CD4-positive, alpha-beta T cell (primary cell): ENCODE measurements at regions of chr3 and their contacts with region 1.

Region 1: DNA sequence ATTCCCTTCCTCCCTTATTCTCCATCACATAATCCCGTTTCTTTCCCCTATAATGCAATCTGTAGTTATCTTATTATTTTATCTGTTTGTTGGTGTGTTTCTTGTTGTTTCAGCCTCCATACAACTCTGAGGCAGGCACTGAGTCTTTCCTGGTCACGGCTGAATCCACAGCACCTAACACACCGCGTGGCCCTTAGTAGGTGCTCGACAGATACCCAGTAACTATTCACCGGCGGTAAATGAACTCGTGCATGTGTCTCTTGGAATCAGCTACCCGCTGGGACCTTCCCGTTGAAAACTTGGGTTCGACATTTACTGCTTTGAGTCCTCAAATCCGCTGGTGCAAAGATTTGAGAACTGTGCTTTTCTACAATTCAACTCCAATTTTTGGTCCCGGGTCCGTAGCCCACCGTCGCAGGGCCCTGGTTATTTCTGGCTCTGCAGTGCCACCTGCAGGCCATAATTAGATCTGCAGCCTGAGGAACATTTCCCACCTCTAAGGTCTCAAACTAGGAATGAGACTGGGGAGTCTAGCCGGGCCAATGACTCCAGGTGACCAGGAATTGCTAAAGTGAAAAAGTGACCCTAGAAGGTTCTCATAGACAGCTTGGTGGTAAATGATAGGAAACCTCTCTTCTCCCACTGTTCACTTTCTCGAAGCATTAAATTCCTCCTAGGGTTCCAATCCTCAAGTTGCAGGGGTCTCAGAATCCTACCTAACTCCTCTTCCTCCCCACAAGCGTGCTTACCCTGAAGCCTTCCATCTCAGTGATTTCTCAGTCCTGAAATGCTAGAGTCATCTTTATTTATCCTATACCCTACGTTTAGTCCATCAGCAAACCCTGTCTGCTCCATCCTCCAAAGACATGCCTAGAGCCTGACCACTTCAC is 40.0 kb upstream of the TRH start:
- DNase-seq: peak in 12 of 14 experiments; percentile 4 to 71 (median 16)
- ATAC-seq: no peak
- H3K4me3 ChIP-seq: no peak overlapping the region
- H3K4me3 Mint-ChIP-seq: no peak overlapping the region
- H3K27ac ChIP-seq: no peak overlapping the region
- H3K27ac Mint-ChIP-seq: no peak overlapping the region
- H3K4me1 ChIP-seq: peaks cover 9% of the 10 kb centered on the region
- H3K4me1 Mint-ChIP-seq: peaks cover 16% of the 10 kb centered on the region
- H3K27me3 ChIP-seq: no peaks in the 10 kb centered on the region
- H3K27me3 Mint-ChIP-seq: peaks cover 3% of the 10 kb centered on the region
- CTCF ChIP-seq: peak; percentile 98

Region 2: GRCh38 chr3:129383292-129383860 is 551.1 kb before region 1 on chr3:
- CTCF ChIA-PET with region 1: no interaction called
- POLR2A ChIA-PET with region 1: no interaction called
- intact Hi-C with region 1: loop called (anchors 5 kb)
- DNase-seq: peak; percentile 11 to 64 (median 30)
- ATAC-seq: peak; percentile 92
- H3K4me3 ChIP-seq: no peak overlapping the region
- H3K4me3 Mint-ChIP-seq: no peak overlapping the region
- H3K27ac ChIP-seq: no peak overlapping the region
- H3K27ac Mint-ChIP-seq: no peak overlapping the region
- H3K4me1 ChIP-seq: no peaks in the 10 kb centered on the region
- H3K4me1 Mint-ChIP-seq: no peaks in the 10 kb centered on the region
- H3K27me3 ChIP-seq: no peaks in the 10 kb centered on the region
- H3K27me3 Mint-ChIP-seq: no peaks in the 10 kb centered on the region
- CTCF ChIP-seq: peak; percentile 68

Region 3: DNA sequence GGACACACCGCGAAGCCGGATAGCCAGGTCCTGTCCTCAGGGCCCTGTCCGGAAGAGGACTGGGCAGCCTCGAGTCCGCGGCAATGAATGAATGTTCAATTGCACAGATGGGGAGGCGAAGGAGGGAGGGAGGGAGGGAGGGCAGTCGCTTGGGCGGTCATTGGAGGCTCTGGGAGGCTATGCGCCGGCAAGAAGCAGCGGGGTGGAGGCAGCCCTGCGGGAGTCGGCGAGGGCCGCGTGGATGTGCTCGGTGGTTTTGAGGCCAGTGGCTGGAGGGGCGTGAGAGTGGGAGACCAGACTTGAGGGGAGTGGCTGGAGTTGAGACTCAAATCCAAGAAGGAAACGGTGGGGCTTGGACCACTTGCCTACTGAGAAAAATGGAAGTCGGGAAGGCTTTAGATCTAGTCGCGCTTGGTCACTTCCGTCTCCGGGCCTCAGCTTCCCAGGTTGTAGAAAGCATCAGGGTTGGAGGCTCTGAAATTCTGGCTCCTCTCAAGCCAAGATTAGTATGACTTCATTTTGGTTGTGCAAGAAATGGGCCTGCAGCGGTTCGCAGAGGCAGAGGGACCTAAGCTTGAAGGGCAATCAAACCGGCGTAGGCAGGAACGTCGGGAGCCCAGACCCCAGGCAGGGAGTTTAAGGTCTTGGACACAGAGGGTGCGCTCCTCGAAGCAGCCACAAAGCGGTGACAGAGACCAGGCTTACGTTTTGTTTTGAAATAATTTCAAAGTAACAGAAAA is 306.9 kb before region 1 on chr3:
- CTCF ChIA-PET with region 1: interaction called, 4 read pairs
- POLR2A ChIA-PET with region 1: no interaction called
- intact Hi-C with region 1: loop called (anchors 1 kb)
- DNase-seq: peak; percentile 55 to 83 (median 62)
- ATAC-seq: peak; percentile 86
- H3K4me3 ChIP-seq: peak overlapping the region; percentile 66
- H3K4me3 Mint-ChIP-seq: peak overlapping the region; percentile 92
- H3K27ac ChIP-seq: peak overlapping the region in 1 of 2 donors; percentile 27
- H3K27ac Mint-ChIP-seq: peak overlapping the region; percentile 66
- H3K4me1 ChIP-seq: peaks cover 28% of the 10 kb centered on the region
- H3K4me1 Mint-ChIP-seq: peaks cover 17% of the 10 kb centered on the region
- H3K27me3 ChIP-seq: no peaks in the 10 kb centered on the region
- H3K27me3 Mint-ChIP-seq: no peaks in the 10 kb centered on the region
- CTCF ChIP-seq: peak; percentile 70

Region 4: GRCh38 chr3:129824926-129825541 is 109.4 kb before region 1 on chr3:
- CTCF ChIA-PET with region 1: no interaction called
- POLR2A ChIA-PET with region 1: no interaction called
- intact Hi-C with region 1: loop called (anchors 5 to 10 kb)
- DNase-seq: peak in 12 of 14 experiments; percentile 2 to 76 (median 16)
- ATAC-seq: peak; percentile 62
- H3K4me3 ChIP-seq: no peak overlapping the region
- H3K4me3 Mint-ChIP-seq: no peak overlapping the region
- H3K27ac ChIP-seq: no peak overlapping the region
- H3K27ac Mint-ChIP-seq: no peak overlapping the region
- H3K4me1 ChIP-seq: peaks cover 7% of the 10 kb centered on the region
- H3K4me1 Mint-ChIP-seq: peaks cover 32% of the 10 kb centered on the region
- H3K27me3 ChIP-seq: no peaks in the 10 kb centered on the region
- H3K27me3 Mint-ChIP-seq: no peaks in the 10 kb centered on the region
- CTCF ChIP-seq: peak; percentile 71

Region 5: GRCh38 chr3:130111185-130111864 is 176.8 kb after region 1 on chr3:
- CTCF ChIA-PET with region 1: no interaction called
- POLR2A ChIA-PET with region 1: no interaction called
- intact Hi-C with region 1: loop called in 1 of 2 experiments (anchors 10 kb)
- DNase-seq: peak; percentile 98 to 100 (median 99)
- ATAC-seq: peak; percentile 100
- H3K4me3 ChIP-seq: peak overlapping the region; percentile 65
- H3K4me3 Mint-ChIP-seq: peak overlapping the region; percentile 99
- H3K27ac ChIP-seq: peak overlapping the region; percentile 67 to 95
- H3K27ac Mint-ChIP-seq: peak overlapping the region; percentile 99
- H3K4me1 ChIP-seq: peaks cover 9% of the 10 kb centered on the region
- H3K4me1 Mint-ChIP-seq: peaks cover 14% of the 10 kb centered on the region
- H3K27me3 ChIP-seq: no peaks in the 10 kb centered on the region
- H3K27me3 Mint-ChIP-seq: no peaks in the 10 kb centered on the region
- CTCF ChIP-seq: no peak